ENCODE measurements at regions of chr9 and their contacts with region 1.

Region 1: DNA sequence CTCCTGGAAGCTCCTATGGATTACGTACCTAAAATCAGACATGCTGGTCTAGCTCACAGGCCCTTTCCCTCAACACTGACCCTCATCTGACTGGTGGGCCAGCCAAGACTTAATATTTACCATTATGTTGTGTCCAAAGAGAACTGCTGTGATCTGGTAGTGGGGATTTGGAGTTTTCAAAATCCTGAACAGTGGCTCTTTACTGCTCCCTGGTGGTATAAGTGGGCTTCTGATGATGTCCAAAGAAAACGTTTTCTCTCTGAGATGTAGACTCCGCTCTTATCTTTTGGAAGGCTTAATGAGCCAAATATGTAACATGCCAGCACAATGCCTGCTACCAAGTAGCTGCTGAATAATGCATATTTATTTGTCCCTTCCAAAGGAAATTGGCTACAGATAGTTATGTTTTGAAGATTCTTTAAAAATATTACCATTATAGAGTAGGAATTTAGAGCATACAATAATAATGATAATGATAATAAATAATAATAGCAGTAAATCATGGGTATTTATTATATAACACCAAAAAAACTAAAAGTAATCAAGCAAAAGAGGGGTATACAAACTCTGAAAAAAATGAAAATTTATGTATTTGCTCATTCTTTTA is 406.6 kb upstream of the TNC start:
- DNase-seq: peak; percentile 27
- H3K4me3 Mint-ChIP-seq: no peak overlapping the region
- H3K27ac Mint-ChIP-seq: no peak overlapping the region
- H3K4me1 Mint-ChIP-seq: no peaks in the 10 kb centered on the region
- H3K27me3 Mint-ChIP-seq: peaks cover 20% of the 10 kb centered on the region

Region 2: DNA sequence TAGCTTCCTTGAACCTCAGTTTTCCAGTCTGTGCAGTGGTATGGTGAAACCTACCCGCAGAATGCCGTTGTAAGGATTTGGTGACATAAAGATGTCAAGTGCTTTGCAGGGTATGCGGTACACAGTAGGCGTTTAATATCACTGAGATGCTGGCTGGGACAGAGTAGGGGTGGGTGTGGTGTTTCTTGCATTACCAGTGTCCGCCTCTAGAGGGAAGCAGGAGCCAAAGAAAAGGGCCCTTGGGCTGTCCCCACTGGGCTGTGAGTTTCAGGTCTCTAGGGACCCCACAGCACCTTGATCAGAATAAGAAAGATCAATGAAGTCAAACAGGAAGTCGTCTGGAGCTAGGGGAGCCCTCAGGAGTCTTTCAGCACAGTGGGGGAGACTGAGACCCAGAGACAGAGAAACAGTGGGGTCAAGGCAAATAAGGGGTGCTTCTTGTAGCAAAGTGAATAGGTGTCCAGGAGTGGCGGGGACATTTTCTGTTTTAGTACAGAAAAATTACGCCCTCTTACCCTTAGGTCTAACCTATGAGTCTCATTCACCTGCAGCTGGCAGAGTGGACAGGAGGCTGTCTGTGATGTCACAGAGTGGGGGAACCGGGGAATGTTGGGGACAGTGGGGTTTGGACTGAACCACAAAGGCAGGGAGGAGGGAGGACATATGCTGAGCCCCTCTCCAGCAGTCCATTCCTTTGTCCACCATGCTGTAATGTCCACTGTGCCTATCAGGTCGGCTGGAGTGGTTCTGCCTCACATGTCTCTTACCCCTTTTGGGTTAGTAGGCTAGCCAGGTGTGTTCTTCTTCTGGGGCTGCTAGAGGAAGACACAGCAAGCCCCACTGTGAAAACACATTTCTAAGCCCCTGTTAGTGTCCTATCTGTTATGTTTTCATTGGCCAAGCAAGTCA is 862.2 kb before region 1 on chr9:
- CTCF ChIA-PET with region 1: interaction called, 3 read pairs
- intact Hi-C with region 1: loop called (anchors 1 kb)
- DNase-seq: peak; percentile 77
- H3K4me3 Mint-ChIP-seq: no peak overlapping the region
- H3K27ac Mint-ChIP-seq: no peak overlapping the region
- H3K4me1 Mint-ChIP-seq: peaks cover 14% of the 10 kb centered on the region
- H3K27me3 Mint-ChIP-seq: peaks cover 2% of the 10 kb centered on the region

Region 3: GRCh38 chr9:114738581-114739316 is 785.8 kb before region 1 on chr9:
- CTCF ChIA-PET with region 1: no interaction called
- intact Hi-C with region 1: loop called (anchors 2 kb)
- DNase-seq: peak; percentile 82
- H3K4me3 Mint-ChIP-seq: no peak overlapping the region
- H3K27ac Mint-ChIP-seq: peak overlapping the region; percentile 86
- H3K4me1 Mint-ChIP-seq: peaks cover 56% of the 10 kb centered on the region
- H3K27me3 Mint-ChIP-seq: no peaks in the 10 kb centered on the region

Region 4: DNA sequence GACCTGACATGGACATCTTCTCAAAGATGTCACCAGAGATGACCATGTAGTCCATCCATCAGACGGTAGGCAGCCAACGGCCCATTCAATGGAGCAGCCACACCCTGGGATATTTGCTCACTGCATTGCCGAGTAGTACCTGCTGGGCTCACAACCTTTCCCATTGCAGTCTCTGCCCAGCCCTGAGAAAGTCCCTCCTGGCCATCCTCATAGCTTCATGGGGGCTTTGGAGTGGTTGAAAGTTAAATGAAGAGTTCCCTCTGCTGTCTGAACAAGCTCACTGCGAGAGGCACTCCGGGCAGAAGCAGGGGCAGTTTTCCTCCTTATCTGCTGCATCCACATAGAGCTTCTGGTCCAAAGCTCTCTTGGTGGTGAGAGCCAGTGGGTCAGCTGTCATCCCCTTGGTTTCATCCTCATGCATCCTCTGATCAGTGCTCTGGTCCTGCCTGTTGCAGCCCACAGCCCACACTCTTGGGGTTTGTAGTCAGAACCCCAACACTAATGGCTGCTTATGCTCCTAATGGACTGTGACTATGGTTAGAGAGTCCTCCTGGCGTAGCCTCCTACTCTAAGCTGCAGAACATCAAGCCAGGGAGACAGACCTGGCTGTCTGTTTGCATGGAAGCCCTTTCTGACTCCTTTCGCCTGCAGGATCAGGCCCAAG is 617.5 kb before region 1 on chr9:
- CTCF ChIA-PET with region 1: no interaction called
- intact Hi-C with region 1: loop called (anchors 10 kb)
- DNase-seq: peak; percentile 46
- H3K4me3 Mint-ChIP-seq: no peak overlapping the region
- H3K27ac Mint-ChIP-seq: peak overlapping the region; percentile 98
- H3K4me1 Mint-ChIP-seq: peaks cover 54% of the 10 kb centered on the region
- H3K27me3 Mint-ChIP-seq: no peaks in the 10 kb centered on the region

Region 5: GRCh38 chr9:115013998-115014397 is 510.6 kb before region 1 on chr9:
- CTCF ChIA-PET with region 1: no interaction called
- intact Hi-C with region 1: loop called (anchors 1 kb)
- DNase-seq: peak; percentile 92
- H3K4me3 Mint-ChIP-seq: no peak overlapping the region
- H3K27ac Mint-ChIP-seq: peak overlapping the region; percentile 18
- H3K4me1 Mint-ChIP-seq: peaks cover 44% of the 10 kb centered on the region
- H3K27me3 Mint-ChIP-seq: no peaks in the 10 kb centered on the region

Region 6: GRCh38 chr9:115204904-115205453 is 319.6 kb before region 1 on chr9:
- CTCF ChIA-PET with region 1: no interaction called
- intact Hi-C with region 1: loop called (anchors 10 kb)
- DNase-seq: no peak
- H3K4me3 Mint-ChIP-seq: no peak overlapping the region
- H3K27ac Mint-ChIP-seq: no peak overlapping the region
- H3K4me1 Mint-ChIP-seq: peaks cover 15% of the 10 kb centered on the region
- H3K27me3 Mint-ChIP-seq: peaks cover 33% of the 10 kb centered on the region

Region 7: DNA sequence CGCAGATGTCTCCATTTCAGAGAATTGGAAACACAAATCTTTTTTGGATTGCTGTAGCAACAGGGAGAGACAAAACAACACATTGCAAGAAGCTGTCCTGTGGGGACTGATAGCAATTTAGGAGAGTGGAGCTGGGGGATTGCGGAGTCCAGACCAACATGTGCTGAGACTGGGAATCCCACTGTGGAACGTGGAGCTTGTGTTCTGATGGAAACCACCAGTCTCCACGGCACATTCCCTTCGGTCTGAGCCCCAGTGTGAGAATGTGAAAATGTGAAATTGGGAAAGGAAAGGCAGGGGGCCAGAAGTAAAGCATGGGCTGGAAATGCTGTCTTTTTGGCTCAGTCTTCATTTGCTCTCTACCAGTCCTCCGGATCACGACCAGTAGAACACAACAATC is 57.8 kb before region 1 on chr9:
- CTCF ChIA-PET with region 1: no interaction called
- intact Hi-C with region 1: no loop called
- DNase-seq: no peak
- H3K4me3 Mint-ChIP-seq: no peak overlapping the region
- H3K27ac Mint-ChIP-seq: no peak overlapping the region
- H3K4me1 Mint-ChIP-seq: no peaks in the 10 kb centered on the region
- H3K27me3 Mint-ChIP-seq: peaks cover 5% of the 10 kb centered on the region

Measured in activated naive CD4-positive, alpha-beta T cell treated with anti-CD3 and anti-CD28 coated beads for 36 hours (primary cell).